Endothelial cell of umbilical vein (primary cell): ENCODE measurements at regions of chr17 and their contacts with region 1.

Region 1: DNA sequence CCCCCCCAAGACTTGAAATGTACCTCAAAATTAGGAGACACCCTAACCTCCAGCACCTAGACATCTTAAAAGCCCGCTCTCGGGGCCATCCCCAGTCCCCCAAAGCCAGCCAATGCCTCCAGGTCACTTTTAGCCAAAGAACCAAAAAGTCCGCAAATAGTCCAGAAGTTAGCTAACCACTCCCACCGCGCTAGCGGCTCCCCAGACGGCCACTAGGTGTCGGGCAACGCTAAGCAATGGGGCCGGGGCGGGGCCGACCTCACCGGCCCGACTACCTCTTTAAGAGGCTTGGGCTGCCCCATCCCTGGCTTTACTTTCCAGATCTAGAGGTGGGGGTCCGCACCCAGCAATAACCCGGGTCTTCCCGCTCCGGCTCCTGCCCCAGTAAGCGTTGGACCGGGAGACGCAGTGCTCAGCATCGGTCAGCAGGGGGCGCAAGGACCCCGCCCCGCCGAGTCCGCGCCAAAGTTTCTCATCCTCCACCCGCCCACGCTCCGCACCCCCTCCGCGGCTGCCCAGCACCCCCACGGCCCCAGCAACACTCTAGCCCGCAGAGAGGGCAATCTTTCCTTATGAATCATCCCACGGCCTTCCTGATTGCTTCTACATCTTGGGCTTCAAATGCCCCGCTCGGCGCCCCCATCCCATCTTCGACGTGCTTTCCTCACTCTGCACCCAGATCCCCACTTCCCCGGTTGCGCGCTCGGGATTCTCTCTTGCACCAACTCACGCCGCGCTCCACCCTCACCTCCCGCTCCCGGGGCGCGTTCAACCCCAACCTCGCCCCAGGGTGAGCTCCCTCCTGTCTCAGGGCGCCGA is 765 bp downstream of the COL1A1 start:
- DNase-seq: peak; percentile 68
- H3K4me3 ChIP-seq: peak overlapping the region in 2 of 3 experiments; percentile 13 to 18
- H3K27ac ChIP-seq: no peak overlapping the region
- H3K4me1 ChIP-seq: no peaks in the 10 kb centered on the region
- H3K27me3 ChIP-seq: peaks cover 13 to 24% of the 10 kb centered on the region in 2 experiments
- CTCF ChIP-seq: peak; percentile 95 to 100
- POLR2A ChIP-seq: no peak

Region 2: GRCh38 chr17:50125420-50125997 is 75.2 kb before region 1 on chr17:
- CTCF ChIA-PET with region 1: no interaction called
- POLR2A ChIA-PET with region 1: no interaction called
- dilution Hi-C with region 1: no loop called
- intact Hi-C with region 1: no loop called
- DNase-seq: no peak
- H3K4me3 ChIP-seq: no peak overlapping the region
- H3K27ac ChIP-seq: no peak overlapping the region
- H3K4me1 ChIP-seq: peaks cover 31% of the 10 kb centered on the region
- H3K27me3 ChIP-seq: no peaks in the 10 kb centered on the region
- CTCF ChIP-seq: no peak
- POLR2A ChIP-seq: no peak

Region 3: GRCh38 chr17:50161023-50161910 is 39.4 kb before region 1 on chr17:
- CTCF ChIA-PET with region 1: interaction called, 15 read pairs
- POLR2A ChIA-PET with region 1: no interaction called
- dilution Hi-C with region 1: no loop called
- intact Hi-C with region 1: no loop called
- DNase-seq: peak; percentile 93
- H3K4me3 ChIP-seq: peak overlapping the region; percentile 28 to 63 (median 39)
- H3K27ac ChIP-seq: no peak overlapping the region
- H3K4me1 ChIP-seq: peaks cover 6% of the 10 kb centered on the region
- H3K27me3 ChIP-seq: peaks cover 0 to 2% of the 10 kb centered on the region in 2 experiments
- CTCF ChIP-seq: peak; percentile 95 to 97
- POLR2A ChIP-seq: peak; percentile 22

Region 4: DNA sequence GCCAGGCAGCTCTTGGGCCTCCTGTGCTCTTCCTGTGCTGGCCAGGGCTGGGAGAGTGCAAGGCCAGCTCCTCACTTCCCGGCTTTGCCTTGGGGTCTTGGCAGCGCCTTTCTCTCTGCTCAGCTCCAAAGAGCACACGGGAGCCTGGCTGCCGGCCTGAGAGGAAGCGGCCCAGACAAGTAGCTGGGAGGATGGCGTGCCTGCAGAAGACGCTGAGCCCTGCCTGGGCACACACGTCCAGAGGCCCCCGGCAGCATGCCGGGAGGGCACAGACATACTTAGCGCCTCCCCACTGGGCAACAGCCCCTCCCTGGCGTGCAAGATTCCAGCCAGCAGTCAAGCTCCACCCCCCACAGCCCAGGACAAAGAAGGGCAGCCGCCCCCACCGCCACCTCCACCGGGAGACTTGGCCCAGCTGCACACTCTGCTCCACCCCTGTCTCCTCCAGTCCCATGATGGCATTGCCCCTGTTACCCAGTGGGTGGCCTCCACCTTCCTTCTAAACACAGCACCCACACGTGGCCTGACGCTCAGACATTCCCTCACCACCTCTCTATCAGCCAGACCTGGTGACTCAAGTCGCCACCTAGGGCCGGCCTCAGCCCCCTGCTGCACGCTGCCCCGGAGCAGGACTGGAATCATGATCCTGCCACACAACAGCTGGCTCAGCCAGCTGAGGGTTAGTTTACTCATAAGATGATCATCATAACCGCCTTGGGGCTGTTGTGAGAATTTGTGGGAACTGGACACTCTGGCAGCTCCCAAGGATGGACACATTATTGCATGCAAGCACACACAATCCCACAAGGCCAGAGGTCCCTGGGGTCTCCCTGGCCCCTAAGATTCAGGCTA is 22.5 kb before region 1 on chr17:
- CTCF ChIA-PET with region 1: interaction called, 234 read pairs
- POLR2A ChIA-PET with region 1: no interaction called
- dilution Hi-C with region 1: no loop called
- intact Hi-C with region 1: no loop called
- DNase-seq: peak; percentile 84
- H3K4me3 ChIP-seq: no peak overlapping the region
- H3K27ac ChIP-seq: peak overlapping the region; percentile 73
- H3K4me1 ChIP-seq: peaks cover 16% of the 10 kb centered on the region
- H3K27me3 ChIP-seq: no peaks in the 10 kb centered on the region
- CTCF ChIP-seq: peak; percentile 54 to 72
- POLR2A ChIP-seq: peak; percentile 71

Region 5: GRCh38 chr17:50221864-50222545 is 21.3 kb after region 1 on chr17:
- CTCF ChIA-PET with region 1: interaction called, 80 read pairs
- POLR2A ChIA-PET with region 1: no interaction called
- dilution Hi-C with region 1: no loop called
- intact Hi-C with region 1: no loop called
- DNase-seq: no peak
- H3K4me3 ChIP-seq: no peak overlapping the region
- H3K27ac ChIP-seq: no peak overlapping the region
- H3K4me1 ChIP-seq: no peaks in the 10 kb centered on the region
- H3K27me3 ChIP-seq: peaks cover 13 to 36% of the 10 kb centered on the region in 2 experiments
- CTCF ChIP-seq: no peak
- POLR2A ChIP-seq: no peak

Region 6: GRCh38 chr17:50279181-50279526 is 78.5 kb after region 1 on chr17:
- CTCF ChIA-PET with region 1: interaction called, 236 read pairs
- POLR2A ChIA-PET with region 1: interaction called, 8 read pairs
- dilution Hi-C with region 1: no loop called
- intact Hi-C with region 1: no loop called
- DNase-seq: peak; percentile 36
- H3K4me3 ChIP-seq: no peak overlapping the region
- H3K27ac ChIP-seq: no peak overlapping the region
- H3K4me1 ChIP-seq: peaks cover 10% of the 10 kb centered on the region
- H3K27me3 ChIP-seq: peaks cover 3 to 6% of the 10 kb centered on the region in 2 experiments
- CTCF ChIP-seq: no peak
- POLR2A ChIP-seq: no peak

Region 7: GRCh38 chr17:50361561-50362480 is 161.2 kb after region 1 on chr17:
- CTCF ChIA-PET with region 1: interaction called, 10 read pairs
- POLR2A ChIA-PET with region 1: no interaction called
- dilution Hi-C with region 1: no loop called
- intact Hi-C with region 1: no loop called
- DNase-seq: peak; percentile 61
- H3K4me3 ChIP-seq: no peak overlapping the region
- H3K27ac ChIP-seq: no peak overlapping the region
- H3K4me1 ChIP-seq: no peaks in the 10 kb centered on the region
- H3K27me3 ChIP-seq: no peaks in the 10 kb centered on the region
- CTCF ChIP-seq: peak; percentile 77 to 84
- POLR2A ChIP-seq: no peak